Astrocyte of the cerebellum (primary cell): ENCODE measurements at regions of chr9 and their contacts with region 1.

Region 1: GRCh38 chr9:36023260-36024048 is 13.3 kb upstream of the RECK start:
- DNase-seq: peak; percentile 64
- H3K4me3 ChIP-seq: no peak overlapping the region
- CTCF ChIP-seq: peak; percentile 89

Region 2: GRCh38 chr9:35903049-35903448 is 120.4 kb before region 1 on chr9:
- in situ Hi-C with region 1: loop called (anchors 10 kb)
- DNase-seq: no peak
- H3K4me3 ChIP-seq: no peak overlapping the region
- CTCF ChIP-seq: peak; percentile 47

Region 3: DNA sequence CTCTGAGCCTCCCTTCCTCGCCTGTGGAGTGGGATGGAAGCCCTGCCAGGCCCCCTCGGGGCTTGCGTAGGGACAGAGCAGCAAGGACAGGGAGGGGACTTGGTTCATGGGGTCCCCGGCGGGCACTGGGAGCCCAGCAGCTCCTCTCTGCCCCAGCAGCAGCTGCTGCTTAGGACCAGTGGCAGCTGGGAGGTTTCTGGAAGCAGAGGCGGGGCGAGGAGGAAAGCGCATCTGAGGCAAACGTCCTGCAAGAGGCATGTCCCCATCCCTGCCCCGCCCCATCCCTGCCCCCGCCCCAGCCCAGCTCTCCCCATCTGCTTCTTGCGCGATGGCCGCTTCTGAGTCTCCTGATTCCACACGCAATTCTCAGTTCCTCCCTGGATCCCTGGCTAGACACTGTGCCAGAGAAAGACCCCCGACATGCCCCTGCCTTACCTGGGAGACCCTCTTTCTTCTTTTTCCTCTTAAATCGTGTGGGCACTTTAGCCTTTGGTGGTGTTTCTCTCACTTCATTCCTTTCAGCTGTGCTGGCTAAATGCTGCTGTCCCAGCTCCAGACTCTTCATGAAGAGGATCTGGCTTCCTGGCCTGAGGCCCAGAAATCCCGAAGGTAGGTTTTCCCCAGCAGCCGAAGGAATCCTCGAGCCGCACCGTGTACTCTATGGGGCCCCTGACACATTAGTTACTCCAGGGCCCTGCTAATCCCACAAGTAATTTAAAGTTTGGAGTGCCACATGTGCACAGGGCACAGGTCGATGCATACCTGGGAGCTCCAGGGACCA is 61.1 kb before region 1 on chr9:
- in situ Hi-C with region 1: loop called (anchors 5 kb)
- DNase-seq: peak; percentile 15
- H3K4me3 ChIP-seq: no peak overlapping the region
- CTCF ChIP-seq: no peak

Region 4: DNA sequence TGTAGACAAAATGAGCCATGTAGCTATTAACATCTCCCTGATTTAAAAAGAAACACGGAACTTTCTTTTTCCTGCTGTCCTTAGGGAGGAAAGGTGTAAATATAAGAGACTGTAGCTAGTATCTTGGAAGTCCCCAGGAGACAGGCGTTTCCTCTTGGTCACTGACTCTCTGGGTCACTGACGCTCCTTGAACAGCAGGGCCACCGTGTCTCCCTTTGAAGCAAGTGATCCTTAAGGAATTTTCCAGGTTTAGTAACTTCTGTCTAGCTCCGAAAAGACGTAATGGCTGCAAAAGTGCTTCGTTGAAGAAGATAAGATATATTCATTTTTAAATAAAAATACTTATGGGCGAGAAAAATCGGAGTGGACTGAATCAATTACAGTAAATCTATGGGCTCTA is 166.5 kb after region 1 on chr9:
- in situ Hi-C with region 1: loop called (anchors 10 kb)
- DNase-seq: no peak
- H3K4me3 ChIP-seq: peak overlapping the region; percentile 97
- CTCF ChIP-seq: no peak

Region 5: DNA sequence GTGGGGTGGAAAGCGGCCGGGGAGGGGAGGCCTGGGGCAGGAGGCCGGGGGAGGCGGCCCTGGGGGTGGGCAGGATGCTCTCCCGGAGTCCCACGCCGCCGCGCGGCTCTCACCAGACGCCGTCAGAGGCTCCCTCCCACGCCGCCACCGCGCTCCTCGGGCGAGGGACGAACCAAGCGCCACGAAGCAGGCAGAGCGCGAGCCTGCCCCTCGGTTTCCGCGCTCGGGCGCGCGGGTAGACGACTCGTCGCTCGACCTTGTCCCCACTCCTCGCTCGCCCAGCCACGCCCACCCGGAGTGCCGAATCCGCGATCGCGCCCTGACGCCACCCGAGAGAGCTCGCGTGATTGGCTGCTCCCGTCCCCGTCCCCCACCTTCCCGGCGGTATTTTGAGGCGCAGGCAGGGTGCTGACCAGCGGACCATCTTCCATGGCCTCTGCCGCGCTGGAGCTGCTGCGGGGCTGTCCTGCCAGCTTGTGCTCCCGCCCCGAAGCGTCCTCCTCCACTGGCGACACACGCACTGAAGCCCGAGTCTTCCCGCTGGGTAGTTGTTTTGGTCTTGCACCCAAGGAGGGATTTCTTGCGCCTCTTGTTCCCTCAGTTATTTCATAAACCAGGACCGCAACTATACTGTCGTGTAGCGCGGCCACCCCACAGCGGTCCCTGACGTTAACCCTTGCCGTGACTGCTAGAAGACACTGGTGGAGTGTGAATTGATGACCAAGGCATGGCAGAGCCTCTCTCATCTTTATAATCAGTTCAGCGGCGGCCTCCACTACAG is 234.9 kb after region 1 on chr9 and contains the start of gene GNE:
- in situ Hi-C with region 1: no loop called
- DNase-seq: peak; percentile 85
- H3K4me3 ChIP-seq: peak within 1 kb of the TSS; percentile 86
- CTCF ChIP-seq: no peak